ENCODE measurements at regions of chrX and their contacts with region 1.

Region 1: DNA sequence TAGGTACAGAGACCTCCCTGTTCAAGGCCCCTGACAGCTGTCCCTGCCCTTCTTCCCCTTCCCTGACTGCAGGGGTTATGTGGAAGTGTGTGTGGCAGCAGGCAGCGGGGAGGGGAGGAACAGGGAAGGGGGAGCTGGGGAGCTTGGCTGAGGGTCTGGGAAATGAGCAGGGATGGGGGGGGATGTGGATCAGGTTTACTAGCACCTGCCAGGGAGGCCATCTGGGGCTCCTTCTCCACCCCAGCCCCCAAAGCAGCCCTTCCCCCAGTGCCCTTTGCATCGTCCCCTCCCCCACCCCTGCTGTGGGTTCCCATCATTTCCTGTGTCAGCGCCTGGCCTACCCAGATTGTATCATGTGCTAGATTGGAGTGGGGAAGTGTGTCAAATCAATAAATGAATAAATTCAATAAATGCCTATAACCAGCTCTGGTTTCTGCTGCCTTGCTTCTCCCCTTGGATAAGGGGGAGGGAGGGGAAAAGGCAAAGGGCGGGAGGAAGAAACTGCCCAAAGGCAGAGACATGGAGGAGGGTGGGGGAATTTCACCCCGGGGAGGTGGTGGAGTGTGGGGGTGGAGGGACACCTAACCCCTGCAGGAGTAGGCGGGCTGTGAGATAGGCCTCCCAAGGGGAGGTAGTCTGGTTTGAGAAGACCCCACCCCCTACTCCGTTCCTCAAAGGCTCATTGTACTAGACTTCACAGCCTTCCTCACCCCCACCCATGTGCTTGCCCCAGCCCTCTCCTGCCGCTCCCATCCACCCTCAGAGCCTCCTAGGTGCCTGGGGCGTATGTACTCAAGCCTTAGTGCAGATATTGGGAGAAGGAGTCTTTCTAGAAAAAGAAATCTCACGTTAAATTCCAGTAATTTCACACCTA is 3.2 kb downstream of the CXorf65 start:
- DNase-seq: peak in 8 of 9 donors; percentile 46 to 61 (median 58)
- ATAC-seq: peak; percentile 73
- H3K4me3 ChIP-seq: peak overlapping the region; percentile 45
- H3K4me3 Mint-ChIP-seq: peak overlapping the region; percentile 75 to 98 (median 85)
- H3K27ac ChIP-seq: peak overlapping the region; percentile 82
- H3K27ac Mint-ChIP-seq: peak overlapping the region; percentile 90 to 99 (median 92)
- H3K4me1 ChIP-seq: peaks cover 62 to 74% of the 10 kb centered on the region in 2 donors
- H3K4me1 Mint-ChIP-seq: peaks cover 44 to 92% (median 79%) of the 10 kb centered on the region in 7 donors
- H3K27me3 ChIP-seq: no peaks in the 10 kb centered on the region
- H3K27me3 Mint-ChIP-seq: no peaks in the 10 kb centered on the region

Region 2: DNA sequence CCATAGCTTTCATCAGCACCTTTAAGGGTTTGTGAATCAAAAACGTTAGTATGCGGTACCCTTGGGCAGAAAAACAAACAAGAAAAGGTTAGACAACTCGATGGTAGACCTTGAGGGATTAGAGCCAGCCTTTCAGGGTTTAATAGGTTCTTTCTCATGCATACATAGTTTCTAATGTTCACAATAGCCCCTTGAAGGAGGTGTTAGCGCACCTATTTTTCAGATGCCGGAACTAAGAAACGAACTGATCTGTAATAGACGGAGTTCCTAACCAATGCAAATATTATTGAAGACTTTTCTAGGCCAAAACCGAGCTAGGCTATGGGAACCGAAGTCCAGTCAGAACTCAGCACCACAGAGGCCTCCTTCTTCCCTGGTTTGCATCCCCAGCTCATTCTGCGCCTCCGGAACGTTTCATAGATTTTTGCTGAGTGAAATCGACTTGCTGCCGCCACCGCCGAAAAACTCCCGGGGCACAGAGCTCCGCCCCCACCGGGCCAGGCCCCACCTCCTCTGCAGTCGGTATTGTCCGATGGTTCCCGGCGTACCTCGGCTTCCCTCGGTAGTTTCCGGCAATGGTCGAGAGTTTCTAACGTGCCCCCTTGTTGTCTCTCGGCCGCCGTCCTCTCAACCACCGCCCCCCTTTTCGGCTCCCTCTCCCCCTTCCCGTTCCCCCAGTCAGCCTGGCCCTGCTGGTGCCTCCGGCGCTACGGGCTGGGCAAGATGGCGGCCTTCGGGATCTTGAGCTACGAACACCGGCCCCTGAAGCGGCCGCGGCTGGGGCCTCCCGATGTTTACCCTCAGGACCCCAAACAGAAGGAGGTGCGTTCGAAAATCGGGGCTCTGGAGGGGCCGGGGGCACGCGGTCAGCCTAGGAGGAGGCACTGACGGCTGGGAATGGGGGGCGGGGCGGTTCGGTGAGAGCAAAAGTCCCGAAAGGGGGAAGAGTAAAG is 15.0 kb after region 1 on chrX and contains the start of gene MED12:
- CTCF ChIA-PET with region 1: interaction called, 15 read pairs
- POLR2A ChIA-PET with region 1: interaction called, 125 read pairs
- intact Hi-C with region 1: loop called (anchors 1 kb)
- DNase-seq: peak; percentile 59 to 83 (median 75)
- ATAC-seq: peak; percentile 96
- H3K4me3 ChIP-seq: peak within 1 kb of the TSS; percentile 87
- H3K4me3 Mint-ChIP-seq: peak within 1 kb of the TSS; percentile 81 to 93 (median 86)
- H3K27ac ChIP-seq: peak within 1 kb of the TSS; percentile 93
- H3K27ac Mint-ChIP-seq: peak within 1 kb of the TSS; percentile 84 to 95 (median 92)
- H3K4me1 ChIP-seq: peaks cover 9 to 13% of the 10 kb centered on the region in 2 donors
- H3K4me1 Mint-ChIP-seq: peaks cover 10 to 43% (median 24%) of the 10 kb centered on the region in 7 donors
- H3K27me3 ChIP-seq: no peaks in the 10 kb centered on the region
- H3K27me3 Mint-ChIP-seq: no peaks in the 10 kb centered on the region
- total RNA-seq, gene MED12: 71.1 to 104 (median 77.4) TPM

Measured in naive thymus-derived CD4-positive, alpha-beta T cell (primary cell).